ENCODE measurements at regions of chr18 and their contacts with region 1.

Region 1: GRCh38 chr18:25896178-25896780 is 194.1 kb downstream of the SS18 start:
- DNase-seq: peak; percentile 58 to 64 (median 61)
- ATAC-seq: peak; percentile 90
- H3K4me3 ChIP-seq: no peak overlapping the region
- H3K27ac ChIP-seq: no peak overlapping the region
- H3K4me1 ChIP-seq: no peaks in the 10 kb centered on the region
- H3K27me3 ChIP-seq: no peaks in the 10 kb centered on the region
- CTCF ChIP-seq: peak; percentile 67 to 91 (median 84)
- EP300 ChIP-seq: no peak
- POLR2A ChIP-seq: no peak
- RAD21 ChIP-seq: peak; percentile 62 to 76

Region 2: GRCh38 chr18:24543805-24544498 is 1352.3 kb before region 1 on chr18:
- CTCF ChIA-PET with region 1: no interaction called
- POLR2A ChIA-PET with region 1: no interaction called
- in situ Hi-C with region 1: no loop called
- intact Hi-C with region 1: loop called (anchors 10 kb)
- DNase-seq: peak; percentile 40 to 49 (median 44)
- ATAC-seq: peak; percentile 68
- H3K4me3 ChIP-seq: no peak overlapping the region
- H3K27ac ChIP-seq: no peak overlapping the region
- H3K4me1 ChIP-seq: no peaks in the 10 kb centered on the region
- H3K27me3 ChIP-seq: no peaks in the 10 kb centered on the region
- CTCF ChIP-seq: peak; percentile 39 to 62 (median 51); a peak in 4 of 6 replicates
- EP300 ChIP-seq: no peak
- POLR2A ChIP-seq: no peak
- RAD21 ChIP-seq: peak; percentile 45 to 47; a peak in 3 of 4 replicates

Region 3: GRCh38 chr18:24878289-24878688 is 1018.0 kb before region 1 on chr18:
- CTCF ChIA-PET with region 1: no interaction called
- POLR2A ChIA-PET with region 1: no interaction called
- in situ Hi-C with region 1: no loop called
- intact Hi-C with region 1: loop called (anchors 10 kb)
- DNase-seq: peak in 1 of 4 experiments; percentile 28
- ATAC-seq: no peak
- H3K4me3 ChIP-seq: no peak overlapping the region
- H3K27ac ChIP-seq: no peak overlapping the region
- H3K4me1 ChIP-seq: no peaks in the 10 kb centered on the region
- H3K27me3 ChIP-seq: no peaks in the 10 kb centered on the region
- CTCF ChIP-seq: peak in 2 of 3 experiments; percentile 35 to 36; a peak in 1 of 6 replicates
- EP300 ChIP-seq: no peak
- POLR2A ChIP-seq: no peak
- RAD21 ChIP-seq: peak; percentile 57 to 59

Region 4: GRCh38 chr18:25561918-25562317 is 334.4 kb before region 1 on chr18:
- CTCF ChIA-PET with region 1: no interaction called
- POLR2A ChIA-PET with region 1: no interaction called
- in situ Hi-C with region 1: no loop called
- intact Hi-C with region 1: loop called (anchors 5 kb)
- DNase-seq: peak; percentile 26 to 37 (median 36)
- ATAC-seq: peak; percentile 68
- H3K4me3 ChIP-seq: no peak overlapping the region
- H3K27ac ChIP-seq: no peak overlapping the region
- H3K4me1 ChIP-seq: no peaks in the 10 kb centered on the region
- H3K27me3 ChIP-seq: no peaks in the 10 kb centered on the region
- CTCF ChIP-seq: peak; percentile 22 to 39 (median 33); a peak in 3 of 6 replicates
- EP300 ChIP-seq: no peak
- POLR2A ChIP-seq: no peak
- RAD21 ChIP-seq: no peak